Activated T-helper 1 cell treated with anti-CD3 and anti-CD28 coated beads, Interleukin-12 subunit alpha, Interleukin-12 subunit beta, Interleukin-2, Interleukin-4 antibody, amounts not matched to agents 30 ng/mL and 10 ng/mL and 1 ng/mL, durations not matched to agents 14 hours and 24 hours and 36 hours (primary cell): ENCODE measurements at regions of chr3 and their contacts with region 1.

Region 1: GRCh38 chr3:58899159-58899952 is 150.5 kb downstream of the CFAP20DC start:
- DNase-seq: peak; percentile 32
- H3K4me3 Mint-ChIP-seq: no peak overlapping the region
- H3K27ac Mint-ChIP-seq: peak overlapping the region; percentile 2
- H3K4me1 Mint-ChIP-seq: peaks cover 33% of the 10 kb centered on the region
- H3K27me3 Mint-ChIP-seq: peaks cover 1% of the 10 kb centered on the region

Region 2: DNA sequence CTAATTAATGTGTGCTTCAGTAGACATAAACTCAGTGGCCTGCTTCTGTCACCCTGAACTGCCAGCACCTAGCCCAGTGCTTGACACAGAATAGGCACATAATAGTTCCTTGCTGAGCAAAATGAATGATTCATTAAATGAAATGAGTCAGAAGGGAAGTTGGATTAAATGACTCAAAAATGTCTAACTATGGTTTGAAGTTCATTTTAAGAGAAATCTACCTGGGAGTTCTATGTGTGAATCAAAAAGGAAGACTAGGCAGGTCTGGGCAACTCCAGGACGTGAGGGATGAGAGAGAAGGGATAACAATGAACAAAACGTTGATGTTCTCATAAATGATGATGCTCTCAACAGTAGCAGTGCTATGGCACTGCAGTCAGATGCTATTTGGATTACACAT is 24.6 kb before region 1 on chr3:
- intact Hi-C with region 1: loop called (anchors 1 kb)
- DNase-seq: no peak
- H3K4me3 Mint-ChIP-seq: no peak overlapping the region
- H3K27ac Mint-ChIP-seq: peak overlapping the region; percentile 65
- H3K4me1 Mint-ChIP-seq: peaks cover 14% of the 10 kb centered on the region
- H3K27me3 Mint-ChIP-seq: no peaks in the 10 kb centered on the region